ENCODE measurements at regions of chr20 and their contacts with region 1.

Region 1: DNA sequence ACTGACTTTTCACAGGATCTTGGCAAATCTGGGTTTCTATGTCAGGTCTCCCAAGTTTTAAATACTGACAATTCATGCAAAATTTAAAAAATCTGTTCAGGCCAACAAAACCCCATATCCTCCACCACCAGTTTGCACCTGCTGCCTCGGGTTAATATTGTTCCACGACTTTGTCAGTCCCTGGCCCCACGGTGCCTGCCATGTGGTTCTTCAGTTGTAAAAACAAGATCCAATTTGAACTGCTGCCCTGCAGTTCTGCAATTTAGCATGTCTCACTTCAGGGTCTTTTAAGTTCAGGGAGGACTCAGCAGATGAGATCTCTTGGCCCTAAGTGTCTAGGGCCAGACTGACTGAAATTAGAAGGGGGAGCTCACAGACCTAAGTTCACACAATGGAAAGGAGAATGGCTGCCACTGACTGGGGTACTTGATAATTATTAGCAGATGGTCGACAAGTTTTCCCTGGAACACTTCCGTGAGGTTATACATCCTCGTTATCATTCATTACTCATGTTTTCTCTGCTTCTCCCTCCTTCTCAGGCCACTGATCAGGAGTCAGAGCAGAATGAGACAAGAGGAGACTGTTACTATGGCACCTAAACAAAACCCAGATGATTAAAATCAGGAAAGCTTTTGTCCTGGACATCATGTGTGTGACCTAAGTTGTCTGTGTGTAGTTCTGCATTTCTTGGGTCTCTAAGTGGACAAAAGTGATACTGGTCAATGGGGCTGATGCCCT is 223.6 kb downstream of the KIF16B start:
- DNase-seq: no peak
- ATAC-seq: no peak
- H3K4me3 ChIP-seq: no peak overlapping the region
- H3K27ac ChIP-seq: no peak overlapping the region
- H3K4me1 ChIP-seq: no peaks in the 10 kb centered on the region
- H3K27me3 ChIP-seq: no peaks in the 10 kb centered on the region
- CTCF ChIP-seq: no peak

Region 2: GRCh38 chr20:15594254-15594653 is 755.4 kb before region 1 on chr20:
- intact Hi-C with region 1: no loop called
- DNase-seq: no peak
- ATAC-seq: no peak
- H3K4me3 ChIP-seq: no peak overlapping the region
- H3K27ac ChIP-seq: no peak overlapping the region
- H3K4me1 ChIP-seq: no peaks in the 10 kb centered on the region
- H3K27me3 ChIP-seq: no peaks in the 10 kb centered on the region
- CTCF ChIP-seq: no peak

Region 3: GRCh38 chr20:16283992-16284742 is 65.5 kb before region 1 on chr20:
- intact Hi-C with region 1: no loop called
- DNase-seq: no peak
- ATAC-seq: peak in 4 of 8 donors; percentile 34 to 62 (median 56)
- H3K4me3 ChIP-seq: no peak overlapping the region
- H3K27ac ChIP-seq: no peak overlapping the region
- H3K4me1 ChIP-seq: peaks cover 0 to 6% (median 0%) of the 10 kb centered on the region in 9 donors
- H3K27me3 ChIP-seq: no peaks in the 10 kb centered on the region
- CTCF ChIP-seq: no peak

Region 4: DNA sequence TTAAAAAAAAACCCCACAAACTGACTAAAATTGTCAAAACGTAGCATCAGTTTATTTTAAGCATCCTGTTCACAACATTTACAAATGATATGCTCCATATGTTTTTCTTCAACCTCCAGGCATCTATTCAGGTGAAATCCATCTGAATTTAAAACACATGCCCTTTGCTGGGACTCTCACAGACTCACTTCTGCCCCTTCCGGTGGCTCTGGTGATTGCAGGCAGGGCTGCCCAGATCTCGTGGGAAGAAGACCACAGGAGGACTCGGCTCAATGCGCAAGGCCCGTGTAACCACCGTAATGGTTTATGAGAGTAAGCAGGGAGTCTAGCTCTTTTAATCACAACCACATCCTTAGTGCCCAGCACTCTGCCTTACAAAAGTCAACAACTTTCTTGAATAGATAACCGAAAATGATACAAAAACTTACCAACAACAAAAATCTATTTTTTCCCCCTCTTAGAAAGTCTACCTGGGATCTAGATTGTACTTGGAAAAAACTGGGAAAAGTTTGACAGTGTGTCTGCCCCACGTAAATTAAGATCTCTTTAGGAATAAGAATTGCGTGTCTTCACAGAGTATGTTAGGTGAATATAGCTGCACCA is 84.5 kb after region 1 on chr20:
- intact Hi-C with region 1: loop called in 1 of 10 experiments (anchors 10 kb)
- DNase-seq: peak; percentile 32 to 54
- ATAC-seq: peak in 1 of 8 donors; percentile 44
- H3K4me3 ChIP-seq: no peak overlapping the region
- H3K27ac ChIP-seq: no peak overlapping the region
- H3K4me1 ChIP-seq: peaks cover 0 to 19% (median 4%) of the 10 kb centered on the region in 9 donors
- H3K27me3 ChIP-seq: no peaks in the 10 kb centered on the region
- CTCF ChIP-seq: peak; percentile 37 to 75 (median 64)

Measured in heart right ventricle (tissue), 16 donors.